Left cardiac atrium (tissue), 4 donors: ENCODE measurements at regions of chr11 and their contacts with region 1.

Region 1: GRCh38 chr11:111283945-111284481 is 14.3 kb upstream of the POU2AF3 start:
- DNase-seq: no peak
- ATAC-seq: peak in 1 of 2 donors; percentile 75

Region 2: GRCh38 chr11:111422494-111423249 is 138.7 kb after region 1 on chr11:
- intact Hi-C with region 1: loop called (anchors 2 to 5 kb)
- DNase-seq: no peak
- ATAC-seq: peak in 1 of 2 donors; percentile 66

Region 3: GRCh38 chr11:111446404-111447111 is 162.5 kb after region 1 on chr11:
- intact Hi-C with region 1: loop called (anchors 1 to 2 kb)
- DNase-seq: peak; percentile 79
- ATAC-seq: peak; percentile 96 to 97

Region 4: DNA sequence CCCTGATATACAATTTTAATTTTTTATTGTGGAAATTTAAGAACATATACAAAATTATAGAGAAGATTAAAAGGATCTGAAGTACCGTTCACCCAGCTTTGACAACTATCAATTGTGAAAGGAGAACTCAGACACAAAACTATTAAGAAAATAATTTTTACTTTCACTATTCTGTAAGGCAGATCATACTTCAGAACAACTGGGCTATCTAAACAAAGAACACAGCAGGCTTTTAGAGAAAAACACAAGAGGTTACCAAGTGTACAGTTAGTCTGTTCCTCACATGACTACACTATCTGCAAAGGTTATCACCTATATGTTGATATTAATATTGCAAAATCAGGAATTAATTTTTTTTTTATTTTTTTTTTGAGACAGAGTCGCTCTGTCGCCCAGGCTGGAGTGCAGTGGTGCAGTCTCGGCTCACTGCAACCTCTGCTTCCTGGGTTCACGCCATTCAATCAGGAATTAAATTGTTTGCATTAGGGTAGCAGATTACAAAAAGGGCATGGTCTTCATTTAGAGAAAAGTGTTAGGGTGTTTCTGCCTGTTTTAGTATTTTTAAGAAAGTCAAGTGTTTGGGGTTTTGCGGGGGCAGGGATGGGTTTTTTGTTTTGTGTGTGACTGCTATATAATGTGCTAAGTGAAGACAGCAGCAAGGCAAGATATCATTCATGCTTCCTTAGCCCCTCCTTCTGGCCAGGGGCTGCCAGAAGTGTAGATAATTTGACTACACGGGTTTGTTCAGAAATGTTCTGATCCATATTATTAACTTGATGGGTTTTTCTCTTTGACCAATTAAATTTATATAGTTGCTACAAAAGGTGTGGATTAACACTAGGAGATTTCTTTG is 290.6 kb after region 1 on chr11:
- intact Hi-C with region 1: no loop called
- DNase-seq: no peak
- ATAC-seq: peak; percentile 42 to 53